ENCODE measurements at regions of chr14 and their contacts with region 1.

Region 1: DNA sequence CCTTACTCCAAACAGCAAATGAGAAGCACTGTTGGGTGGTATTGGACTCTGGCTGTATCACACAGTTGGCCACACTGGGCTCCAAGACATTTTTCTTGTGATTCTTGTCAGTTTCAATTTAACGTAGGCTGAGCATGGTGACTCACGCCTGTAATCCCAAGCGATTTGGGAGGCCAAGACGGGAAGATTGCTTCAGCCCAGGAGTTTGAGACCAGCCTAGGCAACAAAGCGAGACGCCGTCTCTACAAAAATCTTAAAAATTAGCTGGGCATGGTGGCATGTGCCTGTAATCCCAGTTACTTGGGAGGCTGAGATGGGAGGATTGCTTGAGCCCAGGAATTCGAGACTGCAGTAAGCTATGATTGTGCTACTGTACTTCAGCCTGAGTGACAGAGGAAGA is 35.3 kb upstream of the PLEKHD1 start:
- DNase-seq: no peak
- H3K4me3 ChIP-seq: no peak overlapping the region
- H3K27ac ChIP-seq: no peak overlapping the region
- H3K4me1 ChIP-seq: no peaks in the 10 kb centered on the region
- H3K27me3 ChIP-seq: no peaks in the 10 kb centered on the region
- CTCF ChIP-seq: no peak
- EP300 ChIP-seq: no peak
- POLR2A ChIP-seq: no peak
- RAD21 ChIP-seq: no peak

Region 2: GRCh38 chr14:69354383-69355153 is 94.6 kb before region 1 on chr14:
- CTCF ChIA-PET with region 1: no interaction called
- POLR2A ChIA-PET with region 1: no interaction called
- DNase-seq: no peak
- H3K4me3 ChIP-seq: no peak overlapping the region
- H3K27ac ChIP-seq: no peak overlapping the region
- H3K4me1 ChIP-seq: peaks cover 0 to 5% (median 2%) of the 10 kb centered on the region in 4 experiments; a peak in 4 of 7 replicates
- H3K27me3 ChIP-seq: no peaks in the 10 kb centered on the region
- CTCF ChIP-seq: no peak
- EP300 ChIP-seq: no peak
- POLR2A ChIP-seq: no peak
- RAD21 ChIP-seq: no peak

Region 3: GRCh38 chr14:69460093-69460701 is 11.0 kb after region 1 on chr14:
- CTCF ChIA-PET with region 1: interaction called, 19 read pairs
- POLR2A ChIA-PET with region 1: interaction called, 3 read pairs
- DNase-seq: no peak
- H3K4me3 ChIP-seq: no peak overlapping the region
- H3K27ac ChIP-seq: no peak overlapping the region
- H3K4me1 ChIP-seq: no peaks in the 10 kb centered on the region
- H3K27me3 ChIP-seq: no peaks in the 10 kb centered on the region
- CTCF ChIP-seq: peak in 2 of 3 experiments; percentile 60 to 80; a peak in 3 of 4 replicates
- EP300 ChIP-seq: no peak
- POLR2A ChIP-seq: no peak
- RAD21 ChIP-seq: peak; percentile 70 to 75

Region 4: GRCh38 chr14:69519204-69520100 is 70.2 kb after region 1 on chr14:
- CTCF ChIA-PET with region 1: no interaction called
- POLR2A ChIA-PET with region 1: no interaction called
- DNase-seq: no peak
- H3K4me3 ChIP-seq: no peak overlapping the region
- H3K27ac ChIP-seq: no peak overlapping the region
- H3K4me1 ChIP-seq: peaks cover 0 to 7% (median 3%) of the 10 kb centered on the region in 4 experiments; a peak in 4 of 7 replicates
- H3K27me3 ChIP-seq: no peaks in the 10 kb centered on the region; a peak in 1 of 7 replicates
- CTCF ChIP-seq: no peak
- EP300 ChIP-seq: no peak
- POLR2A ChIP-seq: no peak
- RAD21 ChIP-seq: no peak

Measured in H1 (cell line).